AG04449 (cell line): ENCODE measurements at regions of chr3 and their contacts with region 1.

Region 1: GRCh38 chr3:12841149-12841970 is at the start of gene RPL32:
- DNase-seq: peak; percentile 83
- H3K4me3 ChIP-seq: peak within 1 kb of the TSS; percentile 98
- CTCF ChIP-seq: peak; percentile 66

Region 2: GRCh38 chr3:12810013-12810780 is 31.2 kb before region 1 on chr3:
- CTCF ChIA-PET with region 1: interaction called, 15 read pairs
- POLR2A ChIA-PET with region 1: no interaction called
- DNase-seq: peak; percentile 12
- H3K4me3 ChIP-seq: peak overlapping the region; percentile 62
- CTCF ChIP-seq: peak; percentile 86

Region 3: GRCh38 chr3:12830785-12831156 is 10.6 kb before region 1 on chr3:
- CTCF ChIA-PET with region 1: interaction called, 85 read pairs
- POLR2A ChIA-PET with region 1: interaction called, 7 read pairs
- DNase-seq: no peak
- H3K4me3 ChIP-seq: no peak overlapping the region
- CTCF ChIP-seq: no peak

Region 4: GRCh38 chr3:12861611-12862010 is 20.3 kb after region 1 on chr3:
- CTCF ChIA-PET with region 1: interaction called, 10 read pairs
- POLR2A ChIA-PET with region 1: no interaction called
- DNase-seq: no peak
- H3K4me3 ChIP-seq: no peak overlapping the region
- CTCF ChIP-seq: no peak

Region 5: GRCh38 chr3:12891985-12892839 is 50.9 kb after region 1 on chr3:
- CTCF ChIA-PET with region 1: interaction called, 35 read pairs
- POLR2A ChIA-PET with region 1: no interaction called
- DNase-seq: no peak
- H3K4me3 ChIP-seq: peak overlapping the region; percentile 25
- CTCF ChIP-seq: peak; percentile 70

Region 6: DNA sequence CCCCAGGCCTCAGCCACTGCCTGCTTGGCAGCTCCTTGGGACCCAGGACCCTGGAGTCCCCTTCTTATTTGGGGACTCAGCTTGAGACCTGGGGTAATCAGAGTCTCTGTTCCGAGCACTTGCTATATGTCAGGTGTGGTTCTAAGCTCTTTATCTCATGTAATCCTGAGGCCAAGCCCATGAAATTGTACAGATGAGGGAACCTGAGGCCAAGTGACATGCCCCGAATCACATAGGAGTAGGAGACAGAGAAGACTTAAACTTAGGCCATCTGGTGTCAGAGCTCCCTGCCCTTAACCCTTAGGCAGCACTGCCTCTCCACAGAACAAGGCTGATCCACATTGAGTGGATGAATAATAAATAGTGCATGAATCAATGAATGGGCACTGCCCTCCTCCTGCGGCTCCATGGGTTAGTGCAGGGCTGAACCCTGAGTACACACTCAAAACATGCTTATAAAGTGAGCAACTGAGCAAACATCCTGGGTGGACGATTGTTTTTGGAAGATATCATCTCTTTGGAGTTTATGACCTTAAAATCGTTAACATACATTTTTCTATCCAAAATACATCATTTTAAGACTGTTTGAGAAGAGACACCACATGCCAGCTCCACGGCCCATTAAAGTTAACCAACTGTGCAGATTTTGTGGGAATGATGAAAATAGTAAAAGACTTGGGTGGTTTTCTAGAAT is 265.1 kb after region 1 on chr3:
- CTCF ChIA-PET with region 1: no interaction called
- POLR2A ChIA-PET with region 1: no interaction called
- DNase-seq: no peak
- H3K4me3 ChIP-seq: no peak overlapping the region
- CTCF ChIP-seq: no peak